ENCODE measurements at regions of chr13 and their contacts with region 1.

Region 1: GRCh38 chr13:58949646-58950045 is 1214.1 kb downstream of the DIAPH3 start:
- DNase-seq: no peak
- ATAC-seq: no peak
- H3K4me3 ChIP-seq: no peak overlapping the region
- H3K27ac ChIP-seq: no peak overlapping the region
- H3K4me1 ChIP-seq: no peaks in the 10 kb centered on the region
- H3K27me3 ChIP-seq: no peaks in the 10 kb centered on the region
- CTCF ChIP-seq: no peak
- POLR2A ChIP-seq: no peak
- RAD21 ChIP-seq: no peak

Region 2: GRCh38 chr13:58773280-58773859 is 176.3 kb before region 1 on chr13:
- CTCF ChIA-PET with region 1: no interaction called
- POLR2A ChIA-PET with region 1: no interaction called
- dilution Hi-C with region 1: no loop called
- in situ Hi-C with region 1: no loop called
- intact Hi-C with region 1: no loop called
- DNase-seq: no peak
- ATAC-seq: no peak
- H3K4me3 ChIP-seq: no peak overlapping the region
- H3K27ac ChIP-seq: no peak overlapping the region
- H3K4me1 ChIP-seq: no peaks in the 10 kb centered on the region
- H3K27me3 ChIP-seq: no peaks in the 10 kb centered on the region
- CTCF ChIP-seq: no peak
- POLR2A ChIP-seq: no peak
- RAD21 ChIP-seq: no peak

Region 3: GRCh38 chr13:58869566-58869965 is 80.1 kb before region 1 on chr13:
- CTCF ChIA-PET with region 1: no interaction called
- POLR2A ChIA-PET with region 1: no interaction called
- dilution Hi-C with region 1: no loop called
- in situ Hi-C with region 1: no loop called
- intact Hi-C with region 1: no loop called
- DNase-seq: no peak
- ATAC-seq: no peak
- H3K4me3 ChIP-seq: no peak overlapping the region
- H3K27ac ChIP-seq: no peak overlapping the region
- H3K4me1 ChIP-seq: no peaks in the 10 kb centered on the region
- H3K27me3 ChIP-seq: no peaks in the 10 kb centered on the region
- CTCF ChIP-seq: no peak
- POLR2A ChIP-seq: no peak
- RAD21 ChIP-seq: no peak

Region 4: DNA sequence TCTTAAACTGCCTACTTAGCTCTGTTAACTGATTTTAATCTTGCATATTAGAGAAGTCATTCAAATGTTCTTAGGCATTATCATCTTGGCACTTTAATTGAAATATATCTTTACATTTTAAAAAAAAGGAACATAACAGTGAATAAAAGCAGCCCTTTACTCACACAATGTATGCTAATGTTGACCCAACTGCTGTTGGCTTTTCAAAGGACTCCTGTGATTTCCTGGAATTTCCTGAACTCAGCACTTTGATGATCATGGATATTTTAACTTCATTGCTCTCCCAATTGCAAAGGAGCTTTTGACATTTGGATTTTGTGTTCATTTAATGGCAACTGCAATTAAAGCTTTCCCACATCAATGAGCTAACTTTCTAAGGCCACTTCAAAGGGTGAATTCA is 16.2 kb before region 1 on chr13:
- CTCF ChIA-PET with region 1: no interaction called
- POLR2A ChIA-PET with region 1: interaction called, 12 read pairs
- dilution Hi-C with region 1: no loop called
- in situ Hi-C with region 1: no loop called
- intact Hi-C with region 1: no loop called
- DNase-seq: no peak
- ATAC-seq: no peak
- H3K4me3 ChIP-seq: no peak overlapping the region
- H3K27ac ChIP-seq: no peak overlapping the region
- H3K4me1 ChIP-seq: no peaks in the 10 kb centered on the region
- H3K27me3 ChIP-seq: no peaks in the 10 kb centered on the region
- CTCF ChIP-seq: no peak
- POLR2A ChIP-seq: no peak
- RAD21 ChIP-seq: no peak

Measured in IMR-90 (cell line).